Activated CD4-positive, alpha-beta T cell treated with anti-CD3 and anti-CD28 coated beads for 36 hours (primary cell): ENCODE measurements at regions of chr2 and their contacts with region 1.

Region 1: GRCh38 chr2:215022418-215022817 is 116.0 kb downstream of the ABCA12 start:
- DNase-seq: no peak
- ATAC-seq: no peak
- H3K4me3 Mint-ChIP-seq: no peak overlapping the region
- H3K27ac Mint-ChIP-seq: no peak overlapping the region
- H3K4me1 Mint-ChIP-seq: no peaks in the 10 kb centered on the region
- H3K27me3 Mint-ChIP-seq: peaks cover 4% of the 10 kb centered on the region

Region 2: GRCh38 chr2:215036314-215036713 is 13.9 kb after region 1 on chr2:
- CTCF ChIA-PET with region 1: no interaction called
- POLR2A ChIA-PET with region 1: no interaction called
- intact Hi-C with region 1: loop called in 1 of 2 experiments (anchors 2 kb)
- DNase-seq: no peak
- ATAC-seq: no peak
- H3K4me3 Mint-ChIP-seq: no peak overlapping the region
- H3K27ac Mint-ChIP-seq: no peak overlapping the region
- H3K4me1 Mint-ChIP-seq: no peaks in the 10 kb centered on the region
- H3K27me3 Mint-ChIP-seq: no peaks in the 10 kb centered on the region